Activated naive CD8-positive, alpha-beta T cell treated with anti-CD3 and anti-CD28 coated beads, Interleukin-2, amount 10 ng/mL, durations not matched to agents 7 days and 5 days (primary cell): ENCODE measurements at regions of chr14 and their contacts with region 1.

Region 1: DNA sequence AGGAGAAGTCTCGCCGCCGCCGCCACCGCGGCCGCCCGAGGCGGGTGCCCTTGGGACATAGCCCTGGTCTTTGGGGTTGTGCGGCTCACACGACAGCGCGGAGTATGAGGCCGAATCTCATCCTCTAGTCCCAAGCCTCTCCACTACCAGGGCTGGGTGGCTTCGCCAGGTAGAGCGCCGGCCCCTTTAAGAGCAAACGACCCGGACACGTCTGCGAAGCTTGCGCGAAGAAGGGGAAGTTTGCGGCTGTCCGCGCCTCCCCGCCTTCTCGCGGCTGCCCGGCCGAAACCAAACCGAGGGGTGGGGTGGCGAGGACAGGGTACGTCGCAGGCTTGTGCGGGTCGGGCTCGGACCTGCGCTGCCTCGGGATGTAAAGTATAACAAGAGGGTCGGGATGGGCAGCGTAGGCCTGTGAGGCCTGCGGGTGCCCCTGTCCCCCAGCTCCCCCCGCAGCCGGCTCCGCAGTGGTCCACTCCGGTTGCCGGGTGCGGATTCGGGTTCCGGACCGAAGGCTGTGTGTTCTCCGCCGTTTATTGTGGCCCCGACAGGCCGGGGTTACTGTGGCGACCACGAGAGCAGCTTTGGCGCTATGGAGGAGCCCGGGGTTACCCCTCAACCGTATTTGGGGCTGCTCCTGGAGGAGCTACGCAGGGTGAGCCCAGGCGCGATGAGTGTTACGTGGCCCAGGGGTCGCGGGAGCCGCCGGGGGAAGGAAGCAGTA is 33.3 kb downstream of the MIA2 start:
- DNase-seq: peak; percentile 86
- ATAC-seq: peak; percentile 88
- H3K4me3 Mint-ChIP-seq: peak overlapping the region; percentile 78
- H3K27ac Mint-ChIP-seq: peak overlapping the region; percentile 95
- H3K4me1 Mint-ChIP-seq: peaks cover 36% of the 10 kb centered on the region
- H3K27me3 Mint-ChIP-seq: no peaks in the 10 kb centered on the region

Region 2: DNA sequence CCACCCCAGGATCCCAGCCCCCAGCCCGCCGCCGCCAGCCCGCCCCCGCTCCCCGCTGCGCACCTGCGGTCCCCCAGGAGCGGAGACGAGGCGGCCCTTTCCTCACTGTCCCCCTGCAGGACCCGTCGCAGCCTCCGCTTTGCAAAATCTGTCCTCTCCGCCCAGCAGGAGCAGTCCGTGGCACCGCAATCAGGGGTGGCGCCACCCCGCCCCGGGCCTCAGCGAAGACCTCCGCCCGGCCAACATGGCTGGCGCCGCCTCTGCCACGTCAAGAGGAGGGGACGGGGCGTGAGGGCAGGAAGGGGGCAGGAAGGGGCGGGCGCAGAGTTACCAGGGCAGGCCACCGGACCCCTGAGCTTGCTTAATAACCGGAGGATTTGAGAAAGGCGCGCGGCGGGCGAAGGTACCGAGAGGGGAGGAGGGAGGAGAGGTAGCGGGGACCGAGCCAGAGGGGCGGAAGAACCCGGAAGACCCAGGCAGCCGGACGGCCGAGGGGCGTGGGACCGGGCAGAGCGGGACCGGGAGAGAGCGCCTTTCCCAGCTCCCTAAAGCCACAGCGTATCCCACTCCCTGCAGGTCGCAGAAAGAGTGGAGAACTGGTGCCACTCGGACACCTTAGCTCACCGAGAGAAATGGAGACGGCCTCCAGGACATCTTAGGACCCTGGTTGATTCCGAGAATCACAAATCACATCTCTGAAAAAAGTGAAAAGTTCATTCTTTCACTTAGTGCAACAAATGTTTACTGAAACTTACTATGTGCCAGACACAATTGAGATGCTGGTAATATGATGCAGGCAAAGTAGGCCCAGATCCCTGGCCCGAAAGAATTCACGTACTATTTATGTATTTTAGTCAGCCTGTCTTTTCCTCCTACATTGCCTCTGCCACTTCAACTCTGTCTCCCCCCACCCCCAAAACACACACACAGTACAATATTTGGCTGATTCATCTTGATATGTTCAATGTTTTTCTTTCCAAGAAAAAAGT is 163.8 kb before region 1 on chr14 and contains the start of gene SEC23A:
- POLR2A ChIA-PET with region 1: interaction called, 15 read pairs
- DNase-seq: peak; percentile 84
- ATAC-seq: peak; percentile 96
- H3K4me3 Mint-ChIP-seq: peak within 1 kb of the TSS; percentile 99
- H3K27ac Mint-ChIP-seq: peak within 1 kb of the TSS; percentile 98
- H3K4me1 Mint-ChIP-seq: peaks cover 37% of the 10 kb centered on the region
- H3K27me3 Mint-ChIP-seq: no peaks in the 10 kb centered on the region
- total RNA-seq, gene SEC23A: 66.2 to 66.8 TPM

Region 3: DNA sequence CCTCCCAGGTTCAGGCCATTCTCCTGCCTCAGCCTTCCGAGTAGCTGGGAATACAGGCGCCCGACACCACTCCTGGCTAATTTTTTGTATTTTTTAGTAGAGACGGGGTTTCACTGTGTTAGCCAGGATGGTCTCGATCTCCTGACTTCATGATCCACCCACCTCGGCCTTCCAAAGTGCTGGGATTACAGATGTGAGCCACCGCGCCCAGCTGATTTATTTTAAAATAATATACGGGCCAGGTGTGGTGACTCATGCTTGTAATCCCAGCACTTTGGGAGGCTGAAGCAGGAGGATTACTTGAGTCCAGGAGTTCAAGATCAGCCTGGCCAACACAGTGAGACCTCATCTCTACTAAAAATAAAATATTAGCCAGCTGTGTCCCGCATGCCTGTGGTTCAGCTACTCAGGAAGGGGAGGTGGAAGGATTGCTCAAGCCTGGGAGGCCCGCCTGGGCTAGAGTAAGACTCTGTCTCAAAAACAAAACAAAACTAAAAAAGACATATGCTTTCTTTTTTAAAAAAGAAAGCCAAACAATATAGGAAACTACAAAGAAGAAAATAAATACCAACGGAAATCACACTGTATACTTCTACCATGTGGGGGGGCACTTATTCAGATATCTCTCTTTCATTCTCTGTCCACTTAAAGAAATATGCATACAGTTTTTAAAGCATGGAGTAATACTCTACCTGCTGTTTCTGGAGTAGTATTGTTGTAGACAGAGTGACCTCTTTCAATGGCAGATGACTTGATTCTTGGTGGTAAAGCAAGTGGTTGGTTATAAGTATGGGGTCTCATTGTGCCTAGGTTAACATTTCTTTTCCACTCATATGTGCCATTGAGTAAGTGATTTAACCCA is 34.2 kb before region 1 on chr14:
- POLR2A ChIA-PET with region 1: interaction called, 23 read pairs
- DNase-seq: no peak
- ATAC-seq: no peak
- H3K4me3 Mint-ChIP-seq: peak overlapping the region; percentile 8
- H3K27ac Mint-ChIP-seq: peak overlapping the region; percentile 31
- H3K4me1 Mint-ChIP-seq: peaks cover 44% of the 10 kb centered on the region
- H3K27me3 Mint-ChIP-seq: no peaks in the 10 kb centered on the region